Colonic mucosa (tissue), 4 donors: ENCODE measurements at regions of chr16 and their contacts with region 1.

Region 1: DNA sequence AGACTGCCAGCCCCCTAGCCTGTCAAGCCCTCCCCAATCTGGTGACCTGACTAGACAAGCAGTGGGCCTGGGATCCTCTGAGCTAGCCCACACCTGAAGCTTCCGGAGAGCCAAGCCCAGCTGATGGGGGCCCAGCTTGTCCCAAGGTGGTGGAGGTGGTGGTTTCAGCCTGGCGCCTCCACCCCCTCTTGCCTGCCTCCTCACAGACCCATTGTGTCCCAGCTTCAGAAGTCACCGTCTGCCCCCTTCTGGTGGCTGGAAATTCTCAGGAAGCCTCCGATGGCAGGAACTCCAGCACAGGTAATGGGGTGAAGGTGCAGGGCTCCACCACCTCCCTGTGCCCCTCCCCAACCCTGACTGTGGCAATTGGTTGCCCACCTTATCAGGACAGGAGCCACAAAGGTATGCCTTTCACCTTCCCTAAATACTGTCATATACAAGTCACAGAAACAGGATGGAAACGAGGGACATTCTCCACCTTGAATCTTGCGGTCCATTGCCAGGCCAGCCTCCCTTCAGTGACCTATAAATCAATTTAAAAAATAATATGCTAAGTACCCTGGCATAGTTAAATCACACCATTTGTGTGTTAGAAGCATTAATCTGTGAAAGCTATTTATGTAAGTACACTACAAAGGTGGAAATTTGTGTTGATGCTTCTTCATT is 66.0 kb upstream of the ZNF423 start:
- DNase-seq: peak; percentile 82
- H3K4me3 ChIP-seq: no peak overlapping the region
- H3K27ac ChIP-seq: no peak overlapping the region
- H3K4me1 ChIP-seq: no peaks in the 10 kb centered on the region
- H3K27me3 ChIP-seq: no peaks in the 10 kb centered on the region
- CTCF ChIP-seq: peak; percentile 44

Region 2: DNA sequence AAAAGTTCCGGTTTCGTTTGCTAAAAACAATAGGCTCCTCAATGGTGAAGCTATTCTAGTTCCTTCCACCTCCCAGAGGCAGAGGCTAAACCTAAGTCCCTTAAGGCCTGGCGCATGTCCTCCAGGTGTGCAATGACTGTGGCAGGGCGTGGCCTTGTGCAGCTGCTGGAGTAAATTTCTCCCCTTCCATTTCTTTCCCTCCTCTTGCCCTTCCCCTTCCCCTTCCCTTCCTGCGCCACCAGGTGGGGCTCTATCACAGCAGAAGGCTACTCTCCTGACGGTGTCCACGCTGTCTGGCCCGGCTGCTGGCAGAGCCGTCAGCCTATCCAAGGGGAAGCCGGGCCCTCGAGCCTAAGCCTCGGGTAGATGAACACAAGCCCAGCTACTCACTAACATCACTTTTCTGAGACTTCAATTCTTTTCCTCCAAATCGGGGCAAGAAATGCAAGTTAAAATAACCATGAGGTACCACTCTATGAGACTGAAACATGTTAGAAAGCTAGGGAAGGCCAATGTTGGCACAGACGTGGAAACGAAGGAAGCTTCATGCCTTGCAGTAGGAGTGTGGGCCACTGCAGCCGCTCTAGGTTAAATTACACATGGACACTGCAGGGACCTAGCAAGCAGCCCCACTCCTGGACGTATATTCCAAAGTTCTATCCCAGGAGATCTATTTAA is 513.9 kb before region 1 on chr16:
- intact Hi-C with region 1: loop called (anchors 5 kb)
- DNase-seq: peak; percentile 88
- H3K4me3 ChIP-seq: no peak overlapping the region
- H3K27ac ChIP-seq: no peak overlapping the region
- H3K4me1 ChIP-seq: no peaks in the 10 kb centered on the region
- H3K27me3 ChIP-seq: no peaks in the 10 kb centered on the region
- CTCF ChIP-seq: peak; percentile 78

Region 3: DNA sequence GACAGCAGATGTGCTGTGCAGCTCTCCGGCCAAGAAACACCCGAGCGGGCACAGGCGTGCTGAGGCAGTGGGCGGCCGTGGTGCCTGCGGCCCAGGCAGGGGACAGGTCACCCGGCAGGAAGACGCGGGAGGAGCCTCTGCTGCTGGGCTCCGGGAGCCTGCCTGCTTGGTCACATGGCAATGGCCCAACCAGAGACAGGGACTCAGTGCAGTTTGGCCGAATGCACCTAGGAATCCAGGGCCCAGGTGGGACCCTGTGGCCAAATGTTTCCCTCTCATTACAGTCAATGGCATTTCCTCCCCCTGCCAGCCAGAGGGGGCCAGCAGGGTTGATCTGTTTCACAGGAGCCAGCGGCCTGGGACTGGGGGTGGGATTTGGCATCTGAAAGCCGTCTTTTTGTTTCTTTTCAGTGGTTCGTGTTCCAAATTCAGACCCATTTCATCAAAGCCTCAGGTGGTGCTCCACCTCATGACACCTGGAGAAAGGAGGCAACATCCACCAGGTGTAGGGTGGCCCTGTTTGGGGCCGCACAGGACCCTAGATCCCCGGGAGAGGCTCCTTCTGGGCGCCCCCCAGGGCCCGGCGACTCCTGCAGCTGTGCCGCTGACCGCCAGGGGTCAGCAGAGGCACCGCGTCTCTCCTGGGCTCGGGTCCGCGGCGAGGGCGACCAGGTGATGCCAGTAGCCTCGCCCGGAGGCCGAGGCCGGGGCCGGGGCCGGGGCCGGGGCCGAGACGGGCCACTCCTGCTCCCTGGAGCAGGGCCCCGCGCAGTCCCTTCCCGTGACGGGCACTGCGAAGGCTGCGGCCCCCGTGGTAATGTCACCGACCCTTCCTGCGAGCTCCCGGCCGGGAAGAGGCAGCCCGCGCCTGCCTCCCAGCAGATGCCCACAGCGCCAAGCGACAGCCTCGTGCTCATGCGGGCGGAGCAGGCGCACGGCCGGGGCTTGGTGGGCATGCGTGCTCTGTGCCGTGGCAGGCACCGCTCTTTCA is 429.9 kb before region 1 on chr16:
- intact Hi-C with region 1: loop called (anchors 5 kb)
- DNase-seq: no peak
- H3K4me3 ChIP-seq: peak overlapping the region; percentile 17
- H3K27ac ChIP-seq: no peak overlapping the region
- H3K4me1 ChIP-seq: no peaks in the 10 kb centered on the region
- H3K27me3 ChIP-seq: no peaks in the 10 kb centered on the region
- CTCF ChIP-seq: peak; percentile 93

Region 4: GRCh38 chr16:49542391-49542891 is 379.5 kb before region 1 on chr16:
- intact Hi-C with region 1: loop called (anchors 10 kb)
- DNase-seq: no peak
- H3K4me3 ChIP-seq: no peak overlapping the region
- H3K27ac ChIP-seq: no peak overlapping the region
- H3K4me1 ChIP-seq: no peaks in the 10 kb centered on the region
- H3K27me3 ChIP-seq: no peaks in the 10 kb centered on the region
- CTCF ChIP-seq: no peak